ENCODE measurements at regions of chr2 and their contacts with region 1.

Region 1: DNA sequence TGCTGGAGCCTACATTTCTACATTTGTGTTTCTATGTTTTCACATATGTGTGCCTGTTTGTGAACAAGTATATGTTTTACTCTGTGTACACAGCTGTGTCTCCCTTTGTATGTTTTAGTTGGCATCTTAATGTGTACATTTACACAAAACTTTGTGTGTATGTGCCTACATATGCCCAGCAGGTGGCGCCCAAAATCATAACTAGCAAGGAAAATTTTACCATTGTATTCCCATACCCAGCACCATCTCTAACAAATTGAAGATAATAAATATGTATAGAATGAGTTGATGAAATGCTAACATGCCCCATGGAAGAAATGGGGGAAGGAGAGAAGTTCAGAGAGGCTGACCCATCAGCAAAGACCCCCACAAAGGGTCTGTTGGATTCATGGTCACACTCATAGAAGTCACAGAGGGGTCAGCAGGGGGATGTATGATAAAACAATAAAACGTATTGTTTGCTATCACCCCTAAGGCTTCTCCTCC is 48.1 kb downstream of the PKDCC start:
- DNase-seq: peak; percentile 49 to 84
- ATAC-seq: peak; percentile 67 to 76; a peak in 5 of 6 replicates
- H3K4me3 ChIP-seq: no peak overlapping the region
- H3K27ac ChIP-seq: peak overlapping the region; percentile 8 to 70; a peak in 3 of 6 replicates
- H3K4me1 ChIP-seq: peaks cover 31% of the 10 kb centered on the region
- CTCF ChIP-seq: peak; percentile 99
- EP300 ChIP-seq: no peak
- POLR2A ChIP-seq: no peak
- RAD21 ChIP-seq: peak; percentile 98 to 99

Region 2: GRCh38 chr2:42127425-42128424 is 31.8 kb after region 1 on chr2:
- CTCF ChIA-PET with region 1: interaction called, 19 read pairs
- POLR2A ChIA-PET with region 1: no interaction called
- DNase-seq: no peak
- ATAC-seq: peak in 1 of 2 experiments; percentile 10; a peak in 3 of 6 replicates
- H3K4me3 ChIP-seq: no peak overlapping the region
- H3K27ac ChIP-seq: peak overlapping the region; percentile 1 to 51; a peak in 4 of 6 replicates
- H3K4me1 ChIP-seq: peaks cover 58% of the 10 kb centered on the region
- CTCF ChIP-seq: no peak
- EP300 ChIP-seq: no peak
- POLR2A ChIP-seq: no peak
- RAD21 ChIP-seq: no peak

Region 3: DNA sequence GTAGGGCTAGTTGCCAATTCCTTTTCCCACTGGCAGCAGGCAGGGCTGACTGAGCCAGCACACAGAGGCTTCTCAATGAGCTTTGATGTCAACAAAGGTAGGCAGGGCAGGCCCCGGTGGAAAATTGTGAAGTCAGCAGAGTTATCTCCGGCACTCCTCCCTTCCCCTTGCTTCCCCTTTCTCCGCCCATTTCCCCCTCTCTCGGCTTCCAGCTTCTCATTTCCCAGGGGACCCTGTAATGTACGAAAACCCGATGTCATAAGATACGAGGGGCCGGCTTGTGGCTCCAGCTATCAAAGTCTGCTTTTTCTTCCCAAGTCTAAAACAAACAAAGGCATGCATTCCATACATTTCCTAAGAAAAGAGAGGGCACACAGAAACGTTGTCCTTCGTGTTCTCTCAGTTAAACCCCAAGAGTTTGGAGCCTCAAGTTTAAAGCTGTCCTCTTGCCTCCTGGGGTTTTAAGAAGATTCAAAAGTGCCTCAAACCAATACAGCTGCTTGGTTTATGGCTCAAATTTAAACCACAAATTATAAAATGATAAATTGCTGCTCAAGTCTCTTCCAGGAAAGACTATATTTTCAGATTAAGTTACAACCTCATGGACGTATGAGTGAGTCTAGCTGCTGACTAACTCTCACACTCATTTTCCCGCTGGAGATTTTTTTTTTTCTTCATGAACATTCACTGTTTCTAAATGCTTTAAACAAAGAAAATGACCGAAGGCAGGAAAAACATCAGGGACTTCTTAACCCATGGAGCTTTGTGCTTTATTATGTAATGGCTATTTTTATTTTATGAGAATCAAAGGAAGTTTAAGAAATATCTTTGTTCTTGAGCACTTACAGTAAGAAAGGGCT is 46.0 kb after region 1 on chr2:
- CTCF ChIA-PET with region 1: interaction called, 27 read pairs
- POLR2A ChIA-PET with region 1: no interaction called
- DNase-seq: peak; percentile 77 to 91
- ATAC-seq: peak; percentile 79 to 84
- H3K4me3 ChIP-seq: peak overlapping the region; percentile 26
- H3K27ac ChIP-seq: peak overlapping the region; percentile 79 to 87
- H3K4me1 ChIP-seq: peaks cover 62% of the 10 kb centered on the region
- CTCF ChIP-seq: no peak
- EP300 ChIP-seq: peak in 1 of 2 experiments; percentile 10; a peak in 1 of 5 replicates
- POLR2A ChIP-seq: no peak
- RAD21 ChIP-seq: peak in 1 of 2 experiments; percentile 22; a peak in 1 of 5 replicates

Region 4: GRCh38 chr2:42196403-42197267 is 100.7 kb after region 1 on chr2:
- CTCF ChIA-PET with region 1: interaction called, 35 read pairs
- POLR2A ChIA-PET with region 1: no interaction called
- DNase-seq: peak; percentile 46 to 74
- ATAC-seq: peak; percentile 64 to 79; a peak in 5 of 6 replicates
- H3K4me3 ChIP-seq: no peak overlapping the region
- H3K27ac ChIP-seq: peak overlapping the region; percentile 36 to 50; a peak in 5 of 6 replicates
- H3K4me1 ChIP-seq: peaks cover 64% of the 10 kb centered on the region
- CTCF ChIP-seq: peak; percentile 81
- EP300 ChIP-seq: no peak
- POLR2A ChIP-seq: no peak
- RAD21 ChIP-seq: peak; percentile 80 to 87

Region 5: GRCh38 chr2:42339191-42339912 is 243.4 kb after region 1 on chr2:
- CTCF ChIA-PET with region 1: interaction called, 12 read pairs
- POLR2A ChIA-PET with region 1: no interaction called
- DNase-seq: peak in 1 of 2 experiments; percentile 42
- ATAC-seq: peak; percentile 62 to 76; a peak in 5 of 6 replicates
- H3K4me3 ChIP-seq: no peak overlapping the region
- H3K27ac ChIP-seq: no peak overlapping the region
- H3K4me1 ChIP-seq: peaks cover 16% of the 10 kb centered on the region
- CTCF ChIP-seq: no peak
- EP300 ChIP-seq: no peak
- POLR2A ChIP-seq: no peak
- RAD21 ChIP-seq: no peak